ENCODE measurements at regions of chr13 and their contacts with region 1.

Region 1: DNA sequence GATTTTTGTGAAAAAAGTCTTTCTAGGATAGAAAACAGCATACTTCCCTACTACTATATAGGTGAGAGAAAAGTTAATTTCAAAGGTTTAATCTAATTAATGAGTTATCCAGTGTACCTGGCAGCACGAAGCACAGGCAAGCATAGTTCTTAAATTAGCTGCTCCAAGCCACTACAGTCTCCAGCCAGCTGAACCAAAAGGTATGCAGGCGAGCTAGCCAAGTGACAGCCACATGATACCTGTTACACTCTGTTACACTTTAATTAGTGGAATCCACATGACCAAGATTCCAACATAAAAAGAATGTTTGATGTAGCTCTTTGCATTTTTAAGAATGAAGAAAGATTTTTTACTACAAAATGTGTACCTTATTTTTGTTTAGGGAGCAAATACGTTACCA is 15.5 kb downstream of the SLC25A30 start:
- DNase-seq: peak; percentile 18
- ATAC-seq: no peak
- H3K4me3 Mint-ChIP-seq: no peak overlapping the region
- H3K27ac Mint-ChIP-seq: no peak overlapping the region
- H3K4me1 Mint-ChIP-seq: peaks cover 45% of the 10 kb centered on the region
- H3K27me3 Mint-ChIP-seq: no peaks in the 10 kb centered on the region

Region 2: GRCh38 chr13:45417790-45418534 is 15.3 kb after region 1 on chr13 and contains the start of gene SLC25A30:
- CTCF ChIA-PET with region 1: interaction called, 23 read pairs
- POLR2A ChIA-PET with region 1: interaction called, 19 read pairs
- DNase-seq: peak; percentile 94
- ATAC-seq: peak; percentile 95
- H3K4me3 Mint-ChIP-seq: peak within 1 kb of the TSS; percentile 91
- H3K27ac Mint-ChIP-seq: peak within 1 kb of the TSS; percentile 95
- H3K4me1 Mint-ChIP-seq: peaks cover 13% of the 10 kb centered on the region
- H3K27me3 Mint-ChIP-seq: no peaks in the 10 kb centered on the region
- total RNA-seq, gene SLC25A30: 19.0 to 19.7 TPM

Measured in activated CD8-positive, alpha-beta T cell treated with anti-CD3 and anti-CD28 coated beads, Interleukin-2, amount 10 ng/mL, durations not matched to agents 7 days and 5 days (primary cell).